ENCODE measurements at regions of chr16 and their contacts with region 1.

Region 1: GRCh38 chr16:78503602-78504001 is 404.1 kb downstream of the WWOX start:
- DNase-seq: no peak
- ATAC-seq: no peak

Region 2: DNA sequence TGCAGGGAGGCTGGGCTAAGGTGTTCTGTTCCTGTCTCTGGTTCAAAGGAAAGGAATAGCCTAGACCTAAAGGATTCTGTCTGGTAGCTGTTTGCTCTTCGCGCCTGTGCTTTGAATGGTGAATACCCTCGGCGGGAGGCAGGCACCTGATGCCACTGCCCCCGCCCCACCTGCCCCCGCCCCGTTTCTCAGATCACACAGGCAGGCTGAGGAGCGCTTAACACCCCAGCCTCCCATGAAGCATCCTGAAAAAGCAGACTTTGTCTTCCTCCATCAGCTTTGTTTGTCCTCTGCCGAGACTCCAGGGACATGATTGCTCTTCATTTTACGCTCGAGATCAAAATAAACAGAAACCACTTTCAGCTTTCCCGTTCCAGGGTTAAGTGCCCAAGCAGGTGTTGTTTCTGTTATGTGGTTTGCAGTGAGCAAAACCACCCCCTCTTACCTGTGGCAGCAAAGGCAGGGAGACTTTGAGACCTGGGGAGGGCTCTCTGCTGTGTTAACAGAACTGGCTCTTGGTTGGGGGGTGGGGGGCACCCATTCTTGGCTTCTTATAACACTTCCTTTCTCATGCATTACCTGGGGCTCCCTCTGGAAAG is 48.0 kb after region 1 on chr16:
- intact Hi-C with region 1: no loop called
- DNase-seq: no peak
- ATAC-seq: no peak

Region 3: GRCh38 chr16:78770353-78771091 is 266.9 kb after region 1 on chr16:
- intact Hi-C with region 1: loop called (anchors 2 to 10 kb)
- DNase-seq: peak; percentile 79
- ATAC-seq: peak; percentile 71 to 74

Measured in left cardiac atrium (tissue), 4 donors.